AG04449 (cell line): ENCODE measurements at regions of chr2 and their contacts with region 1.

Region 1: GRCh38 chr2:164613321-164613982 is 7.8 kb downstream of the GRB14 start:
- DNase-seq: no peak
- H3K4me3 ChIP-seq: no peak overlapping the region
- CTCF ChIP-seq: no peak

Region 2: DNA sequence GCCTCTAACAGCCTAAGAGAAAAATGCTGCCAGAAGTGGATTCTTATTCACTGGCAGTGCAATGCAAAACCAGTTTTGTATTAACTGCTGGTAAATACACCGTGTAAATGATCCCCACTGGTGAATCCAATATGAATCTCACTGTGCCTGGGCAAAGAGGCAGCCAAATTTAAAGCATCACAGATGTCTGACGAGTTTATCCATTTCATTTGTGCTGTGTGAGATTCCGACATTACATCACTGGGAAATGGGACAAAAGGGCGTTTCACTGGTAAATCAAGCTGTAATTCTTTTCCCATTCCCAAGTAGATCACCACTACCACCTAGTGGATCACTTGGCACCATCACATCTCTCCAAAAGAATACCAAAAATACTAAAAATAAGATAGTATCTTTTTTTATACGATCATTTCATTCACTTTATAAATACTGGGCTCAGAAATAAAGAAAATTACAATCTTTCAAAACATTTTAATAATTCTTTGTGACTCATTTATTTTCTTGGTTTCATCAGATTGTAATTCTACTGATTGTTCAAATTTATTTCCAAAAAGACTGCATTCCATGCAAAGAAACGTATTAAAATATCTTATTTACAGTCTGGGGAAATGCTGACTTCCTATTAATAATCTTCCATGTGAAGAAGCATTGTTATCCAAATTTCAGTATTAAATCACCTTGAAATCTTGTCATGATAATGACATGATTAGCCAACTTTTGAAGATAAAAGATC is 117.8 kb before region 1 on chr2:
- CTCF ChIA-PET with region 1: no interaction called
- POLR2A ChIA-PET with region 1: no interaction called
- DNase-seq: no peak
- H3K4me3 ChIP-seq: no peak overlapping the region
- CTCF ChIP-seq: peak; percentile 45

Region 3: DNA sequence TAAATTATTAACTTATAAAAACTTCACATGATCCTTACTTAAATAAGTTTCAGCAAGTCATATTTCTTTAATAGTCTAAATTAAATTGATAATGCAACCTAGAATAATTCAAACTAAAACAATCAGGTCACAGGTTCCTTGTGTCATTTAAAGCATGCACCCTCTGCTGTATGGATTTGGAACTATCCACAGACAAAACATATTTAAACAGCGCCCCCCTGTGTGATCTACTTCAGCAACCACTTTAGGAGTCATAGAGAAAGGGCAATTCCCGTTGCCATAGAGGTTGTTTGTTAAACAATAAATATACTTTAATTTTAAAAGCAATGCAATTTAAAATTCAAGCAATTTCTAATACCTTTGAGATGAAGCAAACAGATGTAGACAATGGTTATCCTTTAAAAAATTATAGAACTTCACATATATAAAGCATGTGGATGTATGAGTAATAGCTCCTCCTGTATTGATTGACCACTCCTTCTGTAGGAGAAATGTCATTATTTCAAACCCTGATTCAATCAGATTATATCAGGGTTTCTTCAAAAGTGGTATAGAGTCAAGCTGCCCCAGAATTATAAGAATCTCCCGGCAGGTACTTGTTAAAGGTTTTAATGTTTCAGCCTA is 13.4 kb before region 1 on chr2:
- CTCF ChIA-PET with region 1: interaction called, 15 read pairs
- POLR2A ChIA-PET with region 1: no interaction called
- DNase-seq: peak; percentile 19
- H3K4me3 ChIP-seq: no peak overlapping the region
- CTCF ChIP-seq: peak; percentile 74

Region 4: DNA sequence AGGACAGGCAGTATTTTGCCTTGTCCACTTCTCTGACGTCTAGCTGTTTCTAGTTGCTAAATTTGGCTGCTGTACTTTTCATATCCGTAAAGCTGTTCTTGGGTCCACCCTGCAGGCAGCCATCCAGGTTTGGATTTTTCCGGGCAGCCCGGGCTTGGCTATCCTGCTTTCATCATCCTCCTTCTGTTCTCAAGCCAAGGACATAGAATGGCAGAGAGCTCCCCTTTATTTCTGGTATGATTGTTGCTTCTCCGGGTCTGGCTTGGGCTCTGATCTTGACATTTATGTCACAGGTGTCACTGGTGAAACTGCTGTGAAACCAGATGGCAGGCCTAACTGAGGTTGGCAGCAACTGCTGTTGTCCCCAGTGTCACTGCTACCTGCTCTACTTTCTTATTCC is 661.2 kb after region 1 on chr2:
- CTCF ChIA-PET with region 1: no interaction called
- POLR2A ChIA-PET with region 1: no interaction called
- DNase-seq: no peak
- H3K4me3 ChIP-seq: no peak overlapping the region
- CTCF ChIP-seq: no peak